ENCODE measurements at regions of chrX and their contacts with region 1.

Region 1: DNA sequence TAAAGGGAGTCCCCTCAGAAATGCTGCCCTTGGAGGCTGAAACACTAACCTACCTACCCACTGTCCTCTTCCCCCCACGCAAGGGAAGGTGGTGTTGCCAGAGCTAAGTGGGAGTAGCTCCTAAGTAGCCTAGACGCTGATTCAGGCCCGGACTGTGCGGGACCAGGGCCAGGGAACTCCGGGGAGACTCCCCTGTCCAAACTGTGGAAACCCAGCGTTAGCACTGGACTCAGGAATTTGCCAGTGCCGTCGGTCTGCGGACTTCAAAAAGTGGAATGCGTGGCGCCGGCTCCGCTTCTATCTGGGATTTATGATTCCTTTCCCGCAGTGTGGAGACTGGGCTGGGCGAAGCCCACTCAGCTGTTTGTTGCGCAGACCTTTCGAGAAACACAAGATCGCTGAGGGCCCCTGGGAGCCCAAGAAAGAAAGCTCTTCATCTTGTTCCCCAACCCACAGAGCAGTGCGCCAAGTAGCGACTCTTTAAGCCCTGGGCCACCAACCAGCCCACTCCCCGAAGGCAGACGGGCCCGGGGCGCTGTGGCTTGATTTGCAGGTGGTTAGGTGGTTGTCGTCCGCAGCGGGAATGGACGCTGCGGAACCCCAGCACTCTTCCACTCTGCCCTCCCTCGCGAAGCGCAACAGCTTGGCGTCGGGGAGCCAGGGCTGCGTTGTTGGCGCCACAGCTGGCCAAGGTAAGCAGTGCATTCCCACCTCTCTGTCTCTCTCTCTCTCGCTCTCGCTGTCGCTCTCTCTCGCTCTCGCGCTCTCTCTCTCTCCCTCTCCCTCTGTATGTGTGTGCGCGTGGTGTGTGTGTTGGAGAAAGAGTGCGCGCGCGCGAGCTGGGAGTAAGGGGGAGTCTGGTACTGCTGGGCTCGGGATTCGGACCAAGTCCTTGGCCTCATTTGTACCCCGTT is 2.0 kb downstream of the TMEM255A start:
- DNase-seq: peak; percentile 33
- ATAC-seq: peak; percentile 96
- H3K4me3 Mint-ChIP-seq: peak overlapping the region; percentile 89
- H3K27ac Mint-ChIP-seq: peak overlapping the region; percentile 80
- H3K4me1 Mint-ChIP-seq: peaks cover 22% of the 10 kb centered on the region
- H3K27me3 Mint-ChIP-seq: peaks cover 6% of the 10 kb centered on the region
- CTCF ChIP-seq: no peak

Region 2: GRCh38 chrX:120213436-120214265 is 95.6 kb before region 1 on chrX:
- CTCF ChIA-PET with region 1: interaction called, 10 read pairs
- POLR2A ChIA-PET with region 1: no interaction called
- intact Hi-C with region 1: no loop called
- DNase-seq: no peak
- ATAC-seq: peak; percentile 69
- H3K4me3 Mint-ChIP-seq: no peak overlapping the region
- H3K27ac Mint-ChIP-seq: no peak overlapping the region
- H3K4me1 Mint-ChIP-seq: peaks cover 3% of the 10 kb centered on the region
- H3K27me3 Mint-ChIP-seq: no peaks in the 10 kb centered on the region
- CTCF ChIP-seq: no peak

Region 3: GRCh38 chrX:120250522-120251271 is 58.5 kb before region 1 on chrX and contains the start of gene ZBTB33:
- CTCF ChIA-PET with region 1: interaction called, 8 read pairs
- POLR2A ChIA-PET with region 1: interaction called, 21 read pairs
- intact Hi-C with region 1: loop called (anchors 1 kb)
- DNase-seq: peak; percentile 74
- ATAC-seq: peak; percentile 99
- H3K4me3 Mint-ChIP-seq: peak within 1 kb of the TSS; percentile 93
- H3K27ac Mint-ChIP-seq: peak within 1 kb of the TSS; percentile 93
- H3K4me1 Mint-ChIP-seq: peaks cover 14% of the 10 kb centered on the region
- H3K27me3 Mint-ChIP-seq: no peaks in the 10 kb centered on the region
- CTCF ChIP-seq: no peak
- total RNA-seq, gene ZBTB33: 17.4 and 19.8 TPM in 2 replicates

Region 4: GRCh38 chrX:120755066-120755846 is 446.0 kb after region 1 on chrX:
- CTCF ChIA-PET with region 1: no interaction called
- POLR2A ChIA-PET with region 1: no interaction called
- intact Hi-C with region 1: loop called (anchors 10 kb)
- DNase-seq: peak; percentile 23
- ATAC-seq: peak; percentile 79
- H3K4me3 Mint-ChIP-seq: peak overlapping the region; percentile 3
- H3K27ac Mint-ChIP-seq: peak overlapping the region; percentile 90
- H3K4me1 Mint-ChIP-seq: peaks cover 88% of the 10 kb centered on the region
- H3K27me3 Mint-ChIP-seq: no peaks in the 10 kb centered on the region
- CTCF ChIP-seq: no peak